ENCODE measurements at regions of chr11 and their contacts with region 1.

Region 1: GRCh38 chr11:119018074-119018938 is at the starts of genes RPS25 and TRAPPC4:
- DNase-seq: peak; percentile 98 to 99
- H3K4me3 ChIP-seq: peak within 1 kb of the TSS; percentile 91
- H3K4me3 Mint-ChIP-seq: peak within 1 kb of the TSS; percentile 96
- H3K27ac Mint-ChIP-seq: peak within 1 kb of the TSS; percentile 98
- H3K4me1 ChIP-seq: peaks cover 46% of the 10 kb centered on the region
- H3K4me1 Mint-ChIP-seq: peaks cover 25% of the 10 kb centered on the region
- H3K27me3 ChIP-seq: no peaks in the 10 kb centered on the region
- H3K27me3 Mint-ChIP-seq: no peaks in the 10 kb centered on the region
- CTCF ChIP-seq: no peak
- total RNA-seq, gene RPS25: 1,811 and 1,967 TPM in 2 replicates
- total RNA-seq, gene TRAPPC4: 118 and 126 TPM in 2 replicates

Region 2: GRCh38 chr11:118997627-118998387 is 20.5 kb before region 1 on chr11 and contains the start of gene CENATAC:
- CTCF ChIA-PET with region 1: interaction called, 6 read pairs
- POLR2A ChIA-PET with region 1: interaction called, 13 read pairs
- intact Hi-C with region 1: loop called (anchors 1 kb)
- DNase-seq: peak; percentile 98 to 100
- H3K4me3 ChIP-seq: peak within 1 kb of the TSS; percentile 75
- H3K4me3 Mint-ChIP-seq: peak within 1 kb of the TSS; percentile 96
- H3K27ac Mint-ChIP-seq: peak within 1 kb of the TSS; percentile 94
- H3K4me1 ChIP-seq: peaks cover 17% of the 10 kb centered on the region
- H3K4me1 Mint-ChIP-seq: peaks cover 24% of the 10 kb centered on the region
- H3K27me3 ChIP-seq: no peaks in the 10 kb centered on the region
- H3K27me3 Mint-ChIP-seq: no peaks in the 10 kb centered on the region
- CTCF ChIP-seq: peak in 1 of 2 experiments; percentile 11
- total RNA-seq, gene CENATAC: 185 and 194 TPM in 2 replicates

Region 3: GRCh38 chr11:119057000-119057769 is 38.9 kb after region 1 on chr11 and contains the start of gene HYOU1:
- CTCF ChIA-PET with region 1: no interaction called
- POLR2A ChIA-PET with region 1: interaction called, 5 read pairs
- intact Hi-C with region 1: loop called (anchors 1 kb)
- DNase-seq: peak; percentile 100
- H3K4me3 ChIP-seq: peak within 1 kb of the TSS; percentile 94
- H3K4me3 Mint-ChIP-seq: peak within 1 kb of the TSS; percentile 88
- H3K27ac Mint-ChIP-seq: peak within 1 kb of the TSS; percentile 98
- H3K4me1 ChIP-seq: peaks cover 10% of the 10 kb centered on the region
- H3K4me1 Mint-ChIP-seq: peaks cover 20% of the 10 kb centered on the region
- H3K27me3 ChIP-seq: no peaks in the 10 kb centered on the region
- H3K27me3 Mint-ChIP-seq: no peaks in the 10 kb centered on the region
- CTCF ChIP-seq: peak; percentile 32 to 77
- total RNA-seq, gene HYOU1: 306 and 366 TPM in 2 replicates